PC-9 (cell line): ENCODE measurements at regions of chr2 and their contacts with region 1.

Region 1: DNA sequence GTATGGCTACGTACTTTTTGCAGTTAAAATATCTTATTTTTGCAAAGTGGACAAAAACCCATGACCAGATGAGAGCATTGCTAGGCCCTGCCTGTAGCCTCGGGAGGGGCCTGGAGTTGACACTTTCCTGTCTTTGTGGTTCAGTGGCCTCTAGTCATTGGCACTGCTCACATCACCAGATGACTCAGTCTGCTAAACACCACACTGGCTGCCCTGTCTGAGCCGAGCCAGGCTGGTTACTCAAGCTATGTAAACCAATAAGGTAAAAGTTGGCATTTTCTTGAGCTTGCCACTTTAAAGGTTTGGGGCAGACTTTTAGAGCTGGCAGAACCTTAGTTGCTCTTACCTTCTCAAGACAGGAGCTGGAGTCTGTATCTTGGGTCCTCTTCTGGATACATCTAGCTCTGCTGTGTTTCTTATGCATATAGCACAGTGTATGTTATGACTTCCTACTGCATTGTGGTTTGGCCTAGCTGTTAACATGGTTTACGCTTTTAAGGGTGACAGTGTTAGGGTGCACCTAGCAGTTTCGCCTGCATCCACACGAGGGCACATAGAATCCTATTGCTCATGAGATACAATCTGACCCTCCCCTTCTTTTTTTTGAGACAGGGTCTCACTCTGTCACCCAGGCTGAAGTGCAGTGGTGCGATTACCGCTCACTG is 76.4 kb downstream of the AP1S3 start:
- DNase-seq: peak; percentile 91 to 99
- H3K4me3 ChIP-seq: peak overlapping the region; percentile 42; the same call in 1 of the 2 replicates
- H3K27ac ChIP-seq: peak overlapping the region; percentile 96
- H3K4me1 ChIP-seq: peaks cover 42% of the 10 kb centered on the region
- H3K27me3 ChIP-seq: no peaks in the 10 kb centered on the region
- CTCF ChIP-seq: peak; percentile 60

Region 2: DNA sequence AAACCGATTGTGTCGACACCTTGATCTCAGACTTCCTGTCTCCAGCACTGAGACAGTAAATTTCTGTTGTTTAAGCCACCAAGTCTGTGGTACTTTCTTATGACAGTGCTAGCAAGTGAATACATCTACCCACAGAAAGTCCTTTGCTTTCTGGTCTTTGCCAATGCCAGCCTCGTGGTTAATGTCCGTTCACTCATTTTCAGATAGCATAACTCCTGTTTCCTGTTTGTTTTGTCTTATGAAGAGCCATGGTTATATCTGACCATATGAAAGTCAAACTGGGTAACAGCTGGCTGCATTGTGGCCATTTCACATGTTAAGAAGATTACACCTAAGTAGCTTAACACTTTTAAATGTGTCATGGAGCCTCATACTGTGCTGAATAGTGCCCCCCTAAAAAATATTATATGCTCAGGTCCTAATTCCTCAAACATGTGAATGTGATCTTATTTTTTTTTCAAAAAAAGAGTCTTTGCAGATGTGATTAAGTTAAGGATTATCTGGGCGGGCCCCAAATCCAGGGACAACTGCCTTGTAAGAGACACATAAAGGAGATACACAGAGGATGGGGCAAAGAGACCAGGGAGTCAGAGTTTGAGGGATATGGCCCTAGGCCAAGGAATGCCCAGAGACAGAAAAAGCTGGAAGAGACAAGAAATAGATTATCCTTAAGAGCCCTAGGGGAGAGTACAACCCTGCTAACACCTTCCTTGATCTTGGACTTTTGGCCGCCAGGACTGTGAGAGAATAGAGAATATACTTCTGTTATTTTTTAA is 591.0 kb before region 1 on chr2:
- CTCF ChIA-PET with region 1: no interaction called
- POLR2A ChIA-PET with region 1: interaction called, 11 read pairs
- intact Hi-C with region 1: no loop called
- DNase-seq: no peak
- H3K4me3 ChIP-seq: no peak overlapping the region
- H3K27ac ChIP-seq: no peak overlapping the region
- H3K4me1 ChIP-seq: no peaks in the 10 kb centered on the region
- H3K27me3 ChIP-seq: no peaks in the 10 kb centered on the region
- CTCF ChIP-seq: no peak

Region 3: GRCh38 chr2:223563462-223563861 is 197.5 kb before region 1 on chr2:
- CTCF ChIA-PET with region 1: no interaction called
- POLR2A ChIA-PET with region 1: no interaction called
- intact Hi-C with region 1: loop called (anchors 2 kb)
- DNase-seq: peak; percentile 60 to 99
- H3K4me3 ChIP-seq: peak overlapping the region; percentile 34
- H3K27ac ChIP-seq: peak overlapping the region; percentile 92
- H3K4me1 ChIP-seq: peaks cover 42% of the 10 kb centered on the region
- H3K27me3 ChIP-seq: no peaks in the 10 kb centered on the region
- CTCF ChIP-seq: peak; percentile 37; the same call in 1 of the 2 replicates

Region 4: DNA sequence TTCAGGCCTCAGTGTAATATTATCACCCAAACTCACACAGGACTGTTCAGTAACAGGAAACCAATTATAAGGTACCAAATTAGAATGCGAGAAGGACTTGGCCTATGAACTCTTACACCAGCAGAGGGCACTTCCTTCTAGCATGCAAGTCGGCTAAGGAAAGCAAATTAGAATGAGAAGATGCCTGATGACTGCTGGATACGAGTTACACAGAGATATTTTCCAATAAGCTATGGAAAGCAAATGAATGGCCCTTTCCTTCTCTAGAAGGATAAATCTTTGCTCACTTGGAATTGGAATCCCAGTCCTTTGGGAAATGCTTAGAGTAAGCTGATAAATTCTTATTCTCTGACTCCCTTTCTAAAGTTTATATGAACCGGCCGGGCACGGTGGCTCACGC is 33.4 kb before region 1 on chr2:
- CTCF ChIA-PET with region 1: interaction called, 12 read pairs
- POLR2A ChIA-PET with region 1: interaction called, 12 read pairs
- intact Hi-C with region 1: loop called (anchors 1 kb)
- DNase-seq: peak; percentile 39 to 73
- H3K4me3 ChIP-seq: no peak overlapping the region
- H3K27ac ChIP-seq: no peak overlapping the region
- H3K4me1 ChIP-seq: peaks cover 19% of the 10 kb centered on the region
- H3K27me3 ChIP-seq: no peaks in the 10 kb centered on the region
- CTCF ChIP-seq: peak; percentile 73

Region 5: GRCh38 chr2:223828314-223828713 is 67.3 kb after region 1 on chr2:
- CTCF ChIA-PET with region 1: no interaction called
- POLR2A ChIA-PET with region 1: no interaction called
- intact Hi-C with region 1: no loop called
- DNase-seq: no peak
- H3K4me3 ChIP-seq: no peak overlapping the region
- H3K27ac ChIP-seq: no peak overlapping the region
- H3K4me1 ChIP-seq: no peaks in the 10 kb centered on the region
- H3K27me3 ChIP-seq: no peaks in the 10 kb centered on the region
- CTCF ChIP-seq: no peak

Region 6: DNA sequence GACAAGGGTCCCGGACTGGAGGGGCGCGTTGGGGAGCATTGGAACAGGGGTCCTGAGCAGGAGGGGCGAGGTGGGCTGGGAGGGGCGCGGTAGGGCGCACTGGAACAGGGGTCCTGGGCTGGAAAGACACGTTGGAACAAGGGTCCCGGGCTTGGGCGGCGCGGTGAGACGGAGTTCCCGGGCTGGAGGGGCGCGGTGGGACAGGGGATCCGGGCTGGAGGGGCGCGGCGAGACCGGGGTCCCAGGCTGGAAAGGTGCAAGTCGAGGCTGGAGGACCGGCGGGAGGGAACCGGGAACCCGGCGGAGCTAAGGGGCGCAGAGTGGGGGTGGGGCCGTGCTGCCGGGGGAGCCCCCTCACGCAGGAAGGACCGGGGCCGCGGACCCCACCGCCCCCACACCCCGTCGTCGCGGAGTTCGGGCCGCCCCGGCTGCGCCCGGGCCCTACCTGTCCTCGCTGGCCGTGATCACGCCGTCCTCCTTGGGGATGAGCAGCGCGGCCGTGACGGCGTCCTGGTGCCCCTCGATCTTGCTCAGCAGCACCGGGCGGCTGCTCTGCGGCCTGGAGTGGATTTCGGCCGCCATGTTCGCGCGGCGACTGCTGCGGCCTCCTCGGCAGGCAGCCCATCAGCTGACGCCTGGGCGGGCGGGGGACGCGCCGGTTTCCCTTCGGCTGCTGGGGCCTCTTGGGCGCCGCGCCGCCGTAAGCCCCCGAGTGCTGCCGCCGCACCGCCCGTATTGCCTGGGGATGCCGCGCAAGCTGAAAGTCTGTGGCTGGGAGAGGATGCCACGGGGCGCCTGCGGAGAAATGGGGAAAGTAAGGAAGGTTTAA is 183.9 kb after region 1 on chr2 and contains the start of gene WDFY1:
- CTCF ChIA-PET with region 1: interaction called, 5 read pairs
- POLR2A ChIA-PET with region 1: no interaction called
- intact Hi-C with region 1: loop called (anchors 1 kb)
- DNase-seq: peak; percentile 77 to 94
- H3K4me3 ChIP-seq: peak within 1 kb of the TSS; percentile 74
- H3K27ac ChIP-seq: 0 out of 2 replicates have a peak within 1 kb of the TSS, but pooled peaks have one; percentile 1
- H3K4me1 ChIP-seq: peaks cover 42% of the 10 kb centered on the region
- H3K27me3 ChIP-seq: no peaks in the 10 kb centered on the region
- CTCF ChIP-seq: no peak
- total RNA-seq, gene WDFY1: 81.9 and 84.4 TPM in 2 replicates

Region 7: GRCh38 chr2:224221455-224221913 is 460.5 kb after region 1 on chr2:
- CTCF ChIA-PET with region 1: no interaction called
- POLR2A ChIA-PET with region 1: no interaction called
- intact Hi-C with region 1: no loop called
- DNase-seq: peak; percentile 76 to 99
- H3K4me3 ChIP-seq: no peak overlapping the region
- H3K27ac ChIP-seq: peak overlapping the region; percentile 91
- H3K4me1 ChIP-seq: peaks cover 39% of the 10 kb centered on the region
- H3K27me3 ChIP-seq: no peaks in the 10 kb centered on the region
- CTCF ChIP-seq: no peak